Activated CD8-positive, alpha-beta T cell treated with anti-CD3 and anti-CD28 coated beads for 36 hours (primary cell): ENCODE measurements at regions of chr16 and their contacts with region 1.

Region 1: GRCh38 chr16:66894948-66895688 is 14.8 kb downstream of the PDP2 start:
- DNase-seq: peak; percentile 77
- ATAC-seq: peak; percentile 92
- H3K4me3 Mint-ChIP-seq: no peak overlapping the region
- H3K27ac Mint-ChIP-seq: no peak overlapping the region
- H3K4me1 Mint-ChIP-seq: peaks cover 3% of the 10 kb centered on the region
- H3K27me3 Mint-ChIP-seq: no peaks in the 10 kb centered on the region
- CTCF ChIP-seq: peak; percentile 61

Region 2: GRCh38 chr16:66880288-66881013 is 14.7 kb before region 1 on chr16 and contains the start of gene PDP2:
- CTCF ChIA-PET with region 1: interaction called, 40 read pairs
- POLR2A ChIA-PET with region 1: interaction called, 28 read pairs
- intact Hi-C with region 1: no loop called
- DNase-seq: peak; percentile 96
- ATAC-seq: peak; percentile 90
- H3K4me3 Mint-ChIP-seq: peak within 1 kb of the TSS; percentile 95
- H3K27ac Mint-ChIP-seq: peak within 1 kb of the TSS; percentile 97
- H3K4me1 Mint-ChIP-seq: peaks cover 55% of the 10 kb centered on the region
- H3K27me3 Mint-ChIP-seq: no peaks in the 10 kb centered on the region
- CTCF ChIP-seq: no peak
- total RNA-seq, gene PDP2: 31.2 to 38.1 TPM

Region 3: GRCh38 chr16:66924527-66925321 is 29.6 kb after region 1 on chr16:
- CTCF ChIA-PET with region 1: interaction called, 54 read pairs
- POLR2A ChIA-PET with region 1: interaction called, 3 read pairs
- intact Hi-C with region 1: no loop called
- DNase-seq: peak; percentile 53
- ATAC-seq: peak; percentile 75
- H3K4me3 Mint-ChIP-seq: peak overlapping the region; percentile 44
- H3K27ac Mint-ChIP-seq: no peak overlapping the region
- H3K4me1 Mint-ChIP-seq: peaks cover 12% of the 10 kb centered on the region
- H3K27me3 Mint-ChIP-seq: peaks cover 35% of the 10 kb centered on the region
- CTCF ChIP-seq: peak; percentile 63

Region 4: GRCh38 chr16:66934153-66934838 is 39.2 kb after region 1 on chr16 and contains the start of gene CIAO2B:
- CTCF ChIA-PET with region 1: interaction called, 54 read pairs
- POLR2A ChIA-PET with region 1: interaction called, 4 read pairs
- intact Hi-C with region 1: no loop called
- DNase-seq: peak; percentile 89
- ATAC-seq: peak; percentile 84
- H3K4me3 Mint-ChIP-seq: peak within 1 kb of the TSS; percentile 99
- H3K27ac Mint-ChIP-seq: peak within 1 kb of the TSS; percentile 98
- H3K4me1 Mint-ChIP-seq: peaks cover 47% of the 10 kb centered on the region
- H3K27me3 Mint-ChIP-seq: no peaks in the 10 kb centered on the region
- CTCF ChIP-seq: no peak
- total RNA-seq, gene CIAO2B: 150 to 162 TPM